ENCODE measurements at regions of chr1 and their contacts with region 1.

Region 1: DNA sequence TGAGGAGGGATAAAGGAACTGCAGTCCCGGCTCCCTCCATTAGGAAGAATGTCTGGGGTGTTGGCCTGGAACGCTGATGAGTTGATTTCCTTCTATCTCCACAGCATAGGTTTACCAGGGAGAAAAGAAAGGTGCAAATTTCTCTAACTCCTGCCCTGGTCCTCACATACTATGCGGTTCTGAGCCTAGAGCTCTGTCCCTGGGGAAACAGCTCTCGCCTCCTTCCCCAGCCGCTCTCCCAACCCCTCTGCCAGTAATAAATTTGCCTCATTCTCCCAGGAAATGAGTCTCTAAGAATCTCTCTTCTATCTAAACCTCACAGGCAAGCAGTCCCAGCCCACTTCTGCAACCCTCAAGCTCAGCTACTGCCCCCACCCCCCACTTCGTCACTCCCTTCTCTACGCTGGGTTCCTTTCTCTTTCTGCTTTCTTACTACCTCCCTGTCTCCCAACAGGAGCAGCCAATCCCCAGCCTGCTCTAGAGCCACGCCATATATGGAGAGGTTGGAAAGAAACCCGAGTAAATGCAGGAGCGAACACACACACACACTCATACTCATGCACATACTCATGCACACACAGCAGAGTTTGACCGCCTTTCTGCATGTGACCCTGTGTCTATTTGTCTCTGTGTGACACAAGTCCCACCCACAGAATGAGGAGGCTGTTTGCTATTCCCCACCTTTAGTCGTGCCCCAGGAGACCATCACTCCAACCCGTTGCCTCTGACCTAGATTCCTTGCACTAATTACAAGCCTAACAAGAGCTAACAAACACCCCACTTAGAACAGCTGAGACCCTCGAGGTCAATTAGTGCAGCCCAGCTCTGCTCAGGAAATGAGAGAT is 13.4 kb downstream of the PLEKHO1 start:
- DNase-seq: peak; percentile 75
- CTCF ChIP-seq: no peak

Region 2: DNA sequence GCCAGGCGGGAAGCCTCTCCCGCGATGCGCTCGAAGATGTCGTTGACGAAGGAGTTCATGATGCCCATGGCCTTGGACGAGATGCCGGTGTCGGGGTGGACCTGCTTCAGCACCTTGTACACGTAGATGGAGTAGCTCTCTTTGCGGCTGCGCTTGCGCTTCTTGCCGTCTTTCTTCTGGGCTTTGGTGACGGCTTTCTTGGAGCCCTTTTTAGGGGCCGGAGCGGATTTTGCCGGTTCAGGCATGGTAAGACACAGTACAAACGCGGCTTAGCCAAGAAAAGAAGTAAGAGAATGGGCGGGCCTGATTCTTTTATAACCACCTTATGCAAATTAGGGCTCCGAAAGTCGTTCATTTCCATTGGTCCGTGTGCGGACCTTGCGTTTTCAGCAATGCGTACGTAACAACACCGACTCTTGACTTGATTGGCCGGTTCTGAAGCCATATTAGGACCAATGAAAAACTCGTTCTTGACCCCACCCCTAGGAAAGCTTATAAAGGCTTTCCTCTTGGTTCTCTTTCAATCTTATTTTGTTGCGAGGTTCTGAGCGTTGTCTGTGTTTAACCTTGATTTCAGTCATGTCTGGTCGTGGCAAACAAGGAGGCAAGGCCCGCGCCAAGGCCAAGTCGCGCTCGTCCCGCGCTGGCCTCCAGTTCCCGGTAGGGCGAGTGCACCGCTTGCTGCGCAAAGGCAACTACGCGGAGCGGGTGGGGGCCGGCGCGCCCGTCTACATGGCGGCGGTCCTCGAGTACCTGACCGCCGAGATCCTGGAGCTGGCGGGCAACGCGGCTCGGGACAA is 276.5 kb before region 1 on chr1:
- CTCF ChIA-PET with region 1: interaction called, 6 read pairs
- POLR2A ChIA-PET with region 1: interaction called, 29 read pairs
- DNase-seq: peak; percentile 90
- CTCF ChIP-seq: no peak

Region 3: GRCh38 chr1:150072959-150073358 is 90.1 kb before region 1 on chr1:
- CTCF ChIA-PET with region 1: interaction called, 247 read pairs
- POLR2A ChIA-PET with region 1: interaction called, 4 read pairs
- DNase-seq: peak; percentile 46
- CTCF ChIP-seq: peak; percentile 37

Region 4: GRCh38 chr1:150127868-150128267 is 35.2 kb before region 1 on chr1:
- CTCF ChIA-PET with region 1: interaction called, 11 read pairs
- POLR2A ChIA-PET with region 1: no interaction called
- DNase-seq: no peak
- CTCF ChIP-seq: no peak

Region 5: GRCh38 chr1:150141452-150141851 is 21.6 kb before region 1 on chr1:
- CTCF ChIA-PET with region 1: interaction called, 10 read pairs
- POLR2A ChIA-PET with region 1: no interaction called
- DNase-seq: no peak
- CTCF ChIP-seq: no peak

Region 6: GRCh38 chr1:150149271-150150132 is 13.6 kb before region 1 on chr1 and contains the start of gene PLEKHO1:
- CTCF ChIA-PET with region 1: interaction called, 82 read pairs
- POLR2A ChIA-PET with region 1: interaction called, 25 read pairs
- DNase-seq: peak; percentile 84
- CTCF ChIP-seq: no peak

Region 7: DNA sequence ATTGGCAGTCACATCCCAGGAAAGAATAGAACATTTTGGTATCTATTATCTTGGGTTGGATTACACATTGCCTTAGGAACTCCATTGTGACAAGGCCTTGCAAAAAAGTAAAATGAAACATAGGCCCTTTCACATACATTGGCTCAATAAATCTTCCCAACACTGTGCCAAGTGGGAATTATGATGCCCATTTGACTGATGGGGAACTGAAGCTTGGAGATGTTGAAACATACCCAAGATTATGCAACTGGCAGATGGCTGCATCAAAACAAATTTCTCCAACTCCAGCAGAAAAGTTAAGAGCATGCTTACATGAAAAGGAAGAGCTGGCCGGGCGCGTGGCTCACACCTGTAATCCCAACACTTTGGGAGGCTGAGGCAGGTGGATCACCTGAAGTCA is 13.5 kb after region 1 on chr1:
- CTCF ChIA-PET with region 1: interaction called, 26 read pairs
- POLR2A ChIA-PET with region 1: no interaction called
- DNase-seq: no peak
- CTCF ChIP-seq: no peak

Region 8: DNA sequence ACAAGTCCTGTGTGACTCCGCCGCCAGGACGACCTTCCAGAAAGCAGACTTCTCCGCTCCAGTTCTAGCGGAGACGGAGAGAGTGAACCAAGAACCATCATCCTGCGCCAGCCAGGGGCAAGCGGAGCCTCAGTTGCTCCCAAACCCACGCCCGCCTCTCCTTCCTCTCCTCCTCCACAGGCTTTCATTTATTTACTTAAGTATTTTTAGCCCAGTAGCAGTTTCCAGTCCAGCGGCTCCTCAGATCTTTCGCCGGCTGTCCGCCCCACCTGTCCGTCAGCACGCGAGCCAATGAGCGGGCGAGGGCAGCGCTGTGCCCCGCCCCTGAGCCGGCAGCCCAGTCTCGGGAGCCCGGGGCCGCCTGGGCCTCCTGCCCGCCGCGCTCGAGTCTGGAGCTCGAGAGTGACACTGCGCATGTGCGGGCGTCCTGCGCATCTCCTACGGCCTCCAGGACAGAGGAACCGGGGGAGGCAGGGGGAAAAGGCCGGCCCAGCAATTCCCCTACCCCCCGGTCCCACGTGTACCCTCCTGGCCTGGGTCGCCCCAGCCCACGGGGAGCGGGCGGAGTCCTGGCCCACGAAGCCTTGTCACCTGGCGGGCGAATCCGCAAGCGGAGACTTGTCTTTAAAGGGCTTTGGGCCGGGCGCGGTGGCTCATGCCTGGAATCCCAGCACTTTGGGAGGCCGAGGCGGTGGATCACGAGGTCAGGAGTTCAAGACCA is 352.4 kb after region 1 on chr1 and contains the start of gene FALEC:
- CTCF ChIA-PET with region 1: no interaction called
- POLR2A ChIA-PET with region 1: no interaction called
- DNase-seq: peak; percentile 99
- CTCF ChIP-seq: no peak